Endothelial cell of umbilical vein (primary cell): ENCODE measurements at regions of chr11 and their contacts with region 1.

Region 1: GRCh38 chr11:60098508-60098907 is 10.0 kb downstream of the MS4A2 start:
- DNase-seq: peak; percentile 94
- H3K4me3 ChIP-seq: no peak overlapping the region
- H3K27ac ChIP-seq: peak overlapping the region; percentile 76
- H3K4me1 ChIP-seq: peaks cover 37% of the 10 kb centered on the region
- H3K27me3 ChIP-seq: no peaks in the 10 kb centered on the region
- CTCF ChIP-seq: no peak
- POLR2A ChIP-seq: no peak

Region 2: GRCh38 chr11:59901306-59901705 is 197.2 kb before region 1 on chr11:
- CTCF ChIA-PET with region 1: no interaction called
- POLR2A ChIA-PET with region 1: no interaction called
- dilution Hi-C with region 1: no loop called
- intact Hi-C with region 1: loop called (anchors 1 kb)
- DNase-seq: peak; percentile 98
- H3K4me3 ChIP-seq: peak overlapping the region in 1 of 3 experiments; percentile 38
- H3K27ac ChIP-seq: peak overlapping the region; percentile 95
- H3K4me1 ChIP-seq: peaks cover 15% of the 10 kb centered on the region
- H3K27me3 ChIP-seq: no peaks in the 10 kb centered on the region
- CTCF ChIP-seq: no peak
- POLR2A ChIP-seq: no peak

Region 3: DNA sequence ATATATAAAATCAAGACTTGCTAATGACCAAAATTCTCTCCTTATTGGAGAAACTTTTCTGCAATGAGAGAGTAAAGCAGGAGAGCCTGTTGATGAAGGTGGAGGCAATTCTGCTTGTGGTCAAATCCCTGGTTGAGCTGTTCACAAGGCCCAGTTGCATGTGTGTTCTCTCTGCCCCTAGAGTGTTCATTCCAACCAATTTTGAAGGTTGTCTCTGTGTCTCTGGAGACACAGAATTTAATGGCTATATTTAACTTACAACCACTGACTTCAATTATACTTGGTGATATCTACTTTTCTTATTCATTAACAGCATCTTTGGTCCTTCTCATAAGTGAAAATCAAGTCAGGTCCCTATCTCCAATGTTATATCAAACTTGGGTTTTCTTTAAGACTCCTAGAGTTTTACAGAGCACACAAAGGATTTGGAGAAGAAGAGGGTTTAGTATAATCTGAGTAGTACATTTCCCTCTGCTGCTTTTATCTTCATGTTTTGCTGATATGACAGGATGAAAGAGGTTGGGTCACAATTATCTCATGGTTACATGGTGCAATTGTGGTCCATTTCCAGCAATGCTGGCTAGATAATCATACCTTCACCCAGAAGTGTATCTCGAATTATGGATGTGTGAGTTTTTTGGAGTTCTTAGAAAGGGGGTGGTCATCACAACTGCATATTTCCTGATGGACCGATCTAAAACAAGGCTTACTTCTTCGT is 130.7 kb before region 1 on chr11:
- CTCF ChIA-PET with region 1: no interaction called
- POLR2A ChIA-PET with region 1: no interaction called
- dilution Hi-C with region 1: no loop called
- intact Hi-C with region 1: no loop called
- DNase-seq: no peak
- H3K4me3 ChIP-seq: no peak overlapping the region
- H3K27ac ChIP-seq: no peak overlapping the region
- H3K4me1 ChIP-seq: no peaks in the 10 kb centered on the region
- H3K27me3 ChIP-seq: peaks cover 2 to 6% of the 10 kb centered on the region in 2 experiments
- CTCF ChIP-seq: no peak
- POLR2A ChIP-seq: no peak

Region 4: GRCh38 chr11:60130496-60130895 is 32.0 kb after region 1 on chr11:
- CTCF ChIA-PET with region 1: no interaction called
- POLR2A ChIA-PET with region 1: no interaction called
- dilution Hi-C with region 1: no loop called
- intact Hi-C with region 1: loop called (anchors 2 kb)
- DNase-seq: peak; percentile 86
- H3K4me3 ChIP-seq: no peak overlapping the region
- H3K27ac ChIP-seq: no peak overlapping the region
- H3K4me1 ChIP-seq: peaks cover 12% of the 10 kb centered on the region
- H3K27me3 ChIP-seq: no peaks in the 10 kb centered on the region
- CTCF ChIP-seq: peak; percentile 24 to 44
- POLR2A ChIP-seq: no peak

Region 5: GRCh38 chr11:60159868-60160267 is 61.4 kb after region 1 on chr11:
- CTCF ChIA-PET with region 1: interaction called, 3 read pairs
- POLR2A ChIA-PET with region 1: no interaction called
- dilution Hi-C with region 1: no loop called
- intact Hi-C with region 1: loop called (anchors 1 kb)
- DNase-seq: peak; percentile 93
- H3K4me3 ChIP-seq: no peak overlapping the region
- H3K27ac ChIP-seq: peak overlapping the region; percentile 96
- H3K4me1 ChIP-seq: peaks cover 40% of the 10 kb centered on the region
- H3K27me3 ChIP-seq: no peaks in the 10 kb centered on the region
- CTCF ChIP-seq: no peak
- POLR2A ChIP-seq: peak; percentile 76

Region 6: DNA sequence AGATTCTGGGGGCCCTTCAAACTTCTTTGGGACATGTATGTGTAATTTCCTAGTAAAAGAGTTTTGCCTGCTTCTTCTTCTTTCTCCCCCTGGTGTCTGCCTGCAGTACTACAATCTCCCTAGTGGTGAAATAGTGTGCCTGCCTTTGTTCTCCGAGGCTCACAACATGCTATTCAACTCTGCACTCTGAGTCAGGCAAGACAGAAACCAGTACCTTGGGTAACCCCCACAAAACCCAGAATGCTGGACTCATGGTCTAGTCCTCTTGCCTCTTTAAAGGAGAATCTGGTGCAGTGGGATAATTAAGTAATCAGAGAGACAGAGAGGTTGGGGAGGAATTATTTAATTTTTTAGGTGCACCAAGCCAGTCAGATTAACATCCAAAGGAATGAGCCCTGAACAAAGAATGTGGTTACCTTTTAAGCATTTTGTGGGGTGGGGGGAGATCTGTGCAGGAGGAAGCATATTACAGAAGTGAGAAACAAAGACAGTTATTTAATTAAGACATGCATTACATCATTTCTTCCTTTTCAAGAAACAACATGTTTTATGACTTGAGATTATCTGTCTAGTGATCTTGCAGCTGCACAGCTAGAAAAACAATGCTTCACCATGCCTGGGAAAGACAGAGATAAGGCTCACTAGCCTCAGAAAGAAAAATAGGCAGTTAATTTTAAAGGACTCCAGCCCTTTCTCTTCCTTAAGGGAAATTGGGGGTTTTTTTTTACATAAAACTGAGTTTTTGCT is 95.4 kb after region 1 on chr11:
- CTCF ChIA-PET with region 1: no interaction called
- POLR2A ChIA-PET with region 1: no interaction called
- dilution Hi-C with region 1: no loop called
- intact Hi-C with region 1: loop called (anchors 1 kb)
- DNase-seq: peak; percentile 98
- H3K4me3 ChIP-seq: no peak overlapping the region
- H3K27ac ChIP-seq: peak overlapping the region; percentile 92
- H3K4me1 ChIP-seq: peaks cover 37% of the 10 kb centered on the region
- H3K27me3 ChIP-seq: no peaks in the 10 kb centered on the region
- CTCF ChIP-seq: peak; percentile 97
- POLR2A ChIP-seq: peak; percentile 21